ENCODE measurements at regions of chr6 and their contacts with region 1.

Region 1: GRCh38 chr6:105077596-105078385 is 102.0 kb downstream of the POPDC3 start:
- DNase-seq: no peak
- ATAC-seq: peak; percentile 72; the same call in 1 of the 2 replicates
- H3K4me3 ChIP-seq: no peak overlapping the region
- H3K27ac ChIP-seq: no peak overlapping the region
- H3K4me1 ChIP-seq: peaks cover under 1% of the 10 kb centered on the region; the same call in 1 of the 2 replicates
- H3K27me3 ChIP-seq: no peaks in the 10 kb centered on the region
- CTCF ChIP-seq: peak; percentile 60; the same call in 1 of the 2 replicates

Region 2: GRCh38 chr6:104418125-104418524 is 659.7 kb before region 1 on chr6:
- CTCF ChIA-PET with region 1: no interaction called
- POLR2A ChIA-PET with region 1: no interaction called
- in situ Hi-C with region 1: no loop called
- intact Hi-C with region 1: no loop called
- DNase-seq: no peak
- ATAC-seq: no peak
- H3K4me3 ChIP-seq: no peak overlapping the region
- H3K27ac ChIP-seq: no peak overlapping the region
- H3K4me1 ChIP-seq: no peaks in the 10 kb centered on the region
- H3K27me3 ChIP-seq: no peaks in the 10 kb centered on the region
- CTCF ChIP-seq: no peak

Region 3: DNA sequence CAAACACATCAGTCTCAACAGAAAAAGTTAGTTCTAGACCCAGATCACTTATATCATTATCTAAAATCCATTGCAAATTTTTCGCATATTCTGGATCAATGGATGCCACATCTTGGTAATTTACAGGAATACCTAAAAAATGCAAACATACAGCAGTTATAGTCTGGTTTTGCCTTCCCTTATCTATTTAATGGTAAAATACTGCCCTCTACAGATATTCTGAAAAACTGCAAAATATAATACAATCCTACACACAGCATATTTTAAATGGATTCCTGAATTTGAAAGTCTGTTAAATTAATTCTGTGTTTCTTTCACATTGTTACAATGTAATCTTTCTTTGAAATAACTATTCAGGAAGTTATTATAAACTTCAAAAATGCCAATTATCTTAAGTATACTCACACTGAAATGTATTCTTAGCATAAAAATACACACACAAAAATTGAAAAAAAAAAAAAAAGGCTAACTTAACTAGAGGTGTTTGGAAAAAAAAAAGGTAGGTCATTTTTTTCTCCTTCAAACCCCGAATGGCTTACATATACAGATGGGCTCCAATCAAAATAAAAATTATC is 306.4 kb before region 1 on chr6:
- CTCF ChIA-PET with region 1: no interaction called
- POLR2A ChIA-PET with region 1: no interaction called
- in situ Hi-C with region 1: no loop called
- intact Hi-C with region 1: no loop called
- DNase-seq: peak; percentile 13
- ATAC-seq: peak; percentile 86
- H3K4me3 ChIP-seq: no peak overlapping the region
- H3K27ac ChIP-seq: no peak overlapping the region
- H3K4me1 ChIP-seq: no peaks in the 10 kb centered on the region
- H3K27me3 ChIP-seq: no peaks in the 10 kb centered on the region
- CTCF ChIP-seq: peak; percentile 59; the same call in 1 of the 2 replicates

Region 4: DNA sequence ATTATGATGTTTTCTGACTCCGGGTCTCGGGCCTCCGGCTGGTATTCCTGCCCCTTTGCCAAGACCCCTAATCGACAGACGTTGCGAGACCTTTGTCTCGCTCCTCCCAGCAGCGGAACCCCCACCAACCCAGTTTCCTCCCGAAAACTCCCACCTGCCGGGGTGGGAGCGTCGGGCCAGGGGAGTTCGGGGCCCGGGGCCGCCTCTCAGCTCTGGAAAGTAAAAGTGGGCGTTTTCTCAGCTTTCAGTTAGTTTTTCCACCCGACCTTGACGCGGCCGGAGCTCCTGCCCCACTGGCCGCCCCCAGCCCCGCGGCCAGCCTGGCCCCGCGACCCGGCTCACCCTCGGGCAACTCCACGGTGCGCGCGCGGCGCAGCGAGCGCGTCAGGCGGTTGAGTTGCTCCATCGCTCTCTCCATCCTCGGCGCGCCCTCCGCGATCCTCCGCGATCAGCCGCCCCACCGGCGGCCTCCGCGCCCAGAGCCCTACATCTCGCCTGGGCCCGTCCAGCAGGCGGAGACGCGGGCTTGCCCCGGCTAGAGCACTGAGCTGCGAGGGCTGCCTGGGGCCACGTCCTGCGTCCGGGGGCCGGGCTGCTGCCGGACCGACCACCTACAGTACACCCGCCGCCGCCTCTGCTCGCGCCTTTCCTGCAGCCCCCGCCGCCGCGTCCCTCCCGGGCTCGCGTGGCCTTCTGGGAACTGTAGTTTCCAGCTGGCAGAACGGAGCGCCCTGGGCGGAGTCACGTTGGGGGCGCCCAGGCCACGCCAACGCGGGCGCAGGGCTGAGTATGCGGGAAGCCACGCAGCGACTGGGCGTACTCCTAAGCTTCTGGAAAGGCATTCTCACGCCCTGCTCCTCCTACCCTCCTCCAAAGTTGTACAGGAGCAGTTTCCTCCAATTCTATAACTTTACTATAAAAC is 218.3 kb before region 1 on chr6 and contains the start of gene HACE1:
- CTCF ChIA-PET with region 1: no interaction called
- POLR2A ChIA-PET with region 1: interaction called, 12 read pairs
- in situ Hi-C with region 1: no loop called
- intact Hi-C with region 1: no loop called
- DNase-seq: peak; percentile 33
- ATAC-seq: peak; percentile 100
- H3K4me3 ChIP-seq: peak within 1 kb of the TSS; percentile 70 to 90
- H3K27ac ChIP-seq: peak within 1 kb of the TSS; percentile 79
- H3K4me1 ChIP-seq: peaks cover 3% of the 10 kb centered on the region; the same call in 1 of the 2 replicates
- H3K27me3 ChIP-seq: no peaks in the 10 kb centered on the region
- CTCF ChIP-seq: peak; percentile 19
- total RNA-seq, gene HACE1: 13.0 TPM

Region 5: DNA sequence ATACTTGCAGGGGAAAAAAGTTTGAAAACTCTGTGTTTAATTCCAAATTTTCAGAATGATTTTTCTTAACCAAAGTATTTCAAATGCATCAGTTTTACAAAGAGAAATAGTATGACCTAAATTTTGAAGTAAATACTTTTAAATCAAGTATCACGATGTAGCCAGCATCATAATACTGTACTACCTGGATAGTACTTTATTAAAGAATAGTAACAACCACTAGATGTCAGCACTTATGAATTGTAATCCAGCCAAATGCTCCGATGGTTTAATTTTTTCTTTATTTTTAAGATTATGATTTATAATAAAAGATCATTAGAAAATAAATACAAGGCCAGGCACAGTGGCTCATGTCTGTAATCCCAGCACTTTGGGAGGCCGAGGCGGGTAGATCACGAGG is 180.9 kb before region 1 on chr6:
- CTCF ChIA-PET with region 1: no interaction called
- POLR2A ChIA-PET with region 1: no interaction called
- in situ Hi-C with region 1: no loop called
- intact Hi-C with region 1: loop called (anchors 5 kb)
- DNase-seq: no peak
- ATAC-seq: peak; percentile 78; the same call in 1 of the 2 replicates
- H3K4me3 ChIP-seq: peak overlapping the region in 1 of 2 experiments; percentile 23; a peak in 1 of 4 replicates
- H3K27ac ChIP-seq: no peak overlapping the region
- H3K4me1 ChIP-seq: no peaks in the 10 kb centered on the region
- H3K27me3 ChIP-seq: no peaks in the 10 kb centered on the region
- CTCF ChIP-seq: peak; percentile 65

Region 6: DNA sequence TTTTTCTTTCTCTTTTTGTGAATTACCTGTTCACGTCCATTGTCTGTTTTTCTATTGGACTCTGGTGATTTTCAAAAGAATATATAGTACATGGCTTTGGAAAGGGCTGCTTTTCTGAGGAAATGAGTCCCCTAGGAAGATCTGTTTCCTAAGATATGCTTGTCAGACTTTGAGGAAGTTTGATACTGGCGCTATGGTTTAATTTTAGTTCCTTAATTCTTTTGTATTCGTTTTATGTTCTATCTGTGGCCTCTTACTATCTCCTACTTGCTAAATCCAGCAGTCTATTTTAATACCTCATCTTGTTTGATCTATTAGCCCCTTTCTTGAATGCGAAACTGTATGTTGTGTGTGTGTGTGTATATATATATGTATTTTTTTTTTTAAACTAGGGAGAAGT is 18.9 kb before region 1 on chr6:
- CTCF ChIA-PET with region 1: no interaction called
- POLR2A ChIA-PET with region 1: no interaction called
- in situ Hi-C with region 1: no loop called
- intact Hi-C with region 1: no loop called
- DNase-seq: no peak
- ATAC-seq: no peak
- H3K4me3 ChIP-seq: no peak overlapping the region
- H3K27ac ChIP-seq: no peak overlapping the region
- H3K4me1 ChIP-seq: no peaks in the 10 kb centered on the region
- H3K27me3 ChIP-seq: no peaks in the 10 kb centered on the region
- CTCF ChIP-seq: no peak

Measured in Panc1 (cell line).